BJ (cell line): ENCODE measurements at regions of chr1 and their contacts with region 1.

Region 1: GRCh38 chr1:201408176-201408833 is 9.2 kb upstream of the LAD1 start:
- DNase-seq: peak; percentile 4
- H3K4me3 ChIP-seq: no peak overlapping the region
- H3K27me3 ChIP-seq: peaks cover 27% of the 10 kb centered on the region
- CTCF ChIP-seq: peak; percentile 99

Region 2: GRCh38 chr1:201254625-201255506 is 153.4 kb before region 1 on chr1:
- CTCF ChIA-PET with region 1: interaction called, 35 read pairs
- POLR2A ChIA-PET with region 1: no interaction called
- DNase-seq: no peak
- H3K4me3 ChIP-seq: no peak overlapping the region
- H3K27me3 ChIP-seq: peaks cover 1% of the 10 kb centered on the region; the same call in 1 of the 2 replicates
- CTCF ChIP-seq: peak; percentile 99

Region 3: GRCh38 chr1:201361652-201362504 is 46.4 kb before region 1 on chr1:
- CTCF ChIA-PET with region 1: interaction called, 15 read pairs
- POLR2A ChIA-PET with region 1: no interaction called
- DNase-seq: no peak
- H3K4me3 ChIP-seq: no peak overlapping the region
- H3K27me3 ChIP-seq: peaks cover 9% of the 10 kb centered on the region
- CTCF ChIP-seq: peak; percentile 82

Region 4: GRCh38 chr1:201376464-201377374 is 31.6 kb before region 1 on chr1:
- CTCF ChIA-PET with region 1: interaction called, 12 read pairs
- POLR2A ChIA-PET with region 1: interaction called, 3 read pairs
- DNase-seq: peak; percentile 2
- H3K4me3 ChIP-seq: no peak overlapping the region
- H3K27me3 ChIP-seq: peaks cover 27% of the 10 kb centered on the region
- CTCF ChIP-seq: peak; percentile 61

Region 5: GRCh38 chr1:201385299-201385891 is 22.9 kb before region 1 on chr1:
- CTCF ChIA-PET with region 1: interaction called, 59 read pairs
- POLR2A ChIA-PET with region 1: no interaction called
- DNase-seq: no peak
- H3K4me3 ChIP-seq: no peak overlapping the region
- H3K27me3 ChIP-seq: no peaks in the 10 kb centered on the region; the same call in 1 of the 2 replicates
- CTCF ChIP-seq: peak; percentile 90